HEK293T (cell line): ENCODE measurements at regions of chr10 and their contacts with region 1.

Region 1: GRCh38 chr10:76036111-76036940 is 604.9 kb downstream of the LRMDA start:
- DNase-seq: peak; percentile 77

Region 2: GRCh38 chr10:75744261-75744660 is 292.1 kb before region 1 on chr10:
- CTCF ChIA-PET with region 1: no interaction called
- POLR2A ChIA-PET with region 1: no interaction called
- DNase-seq: no peak

Region 3: GRCh38 chr10:76002262-76002854 is 34.0 kb before region 1 on chr10:
- CTCF ChIA-PET with region 1: no interaction called
- POLR2A ChIA-PET with region 1: no interaction called
- DNase-seq: no peak

Region 4: DNA sequence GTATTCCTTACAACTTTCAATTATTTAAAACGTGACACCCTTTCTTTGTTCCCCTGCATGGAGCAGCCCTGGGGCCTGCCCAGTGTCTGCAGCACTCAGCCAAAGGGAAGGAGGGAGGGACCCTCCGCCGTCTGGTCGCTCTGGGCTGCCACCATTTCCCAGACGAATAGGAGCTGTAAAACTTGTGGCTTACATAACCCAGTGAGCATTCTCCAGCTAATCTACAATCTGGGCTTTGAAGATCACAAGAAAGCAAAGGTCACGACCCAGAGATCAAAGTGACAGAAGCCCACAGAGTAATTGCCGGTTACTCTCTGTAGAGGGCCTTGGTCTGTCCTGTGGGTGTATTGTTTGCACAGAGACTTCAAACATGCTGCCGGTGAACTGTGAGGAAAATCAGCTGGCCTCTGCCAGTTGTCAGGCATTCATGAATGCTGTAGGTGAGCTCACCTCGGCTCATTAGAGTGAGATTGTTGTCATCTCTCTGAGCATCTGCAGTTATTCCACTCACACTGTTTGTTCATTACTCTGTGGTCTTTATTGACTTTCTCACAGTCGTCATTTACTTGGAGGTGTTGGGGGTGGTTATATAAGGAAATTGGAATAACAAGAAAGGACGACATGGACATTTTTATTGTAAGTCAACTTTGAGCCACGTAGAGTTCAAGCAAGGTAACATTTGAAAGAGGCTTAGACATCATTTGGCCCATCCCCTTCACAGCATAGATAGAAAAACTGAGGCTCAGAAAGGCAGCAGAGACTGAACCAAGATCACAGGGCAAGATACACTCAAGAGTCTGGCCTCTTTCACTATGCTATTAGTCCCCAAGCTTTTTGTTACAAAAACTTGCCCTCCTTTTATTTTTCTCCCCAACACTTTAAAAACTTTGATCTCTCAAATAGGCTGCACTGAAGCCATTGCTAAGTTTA is 14.9 kb after region 1 on chr10:
- CTCF ChIA-PET with region 1: interaction called, 12 read pairs
- POLR2A ChIA-PET with region 1: no interaction called
- DNase-seq: no peak